CD8-positive, alpha-beta memory T cell (primary cell): ENCODE measurements at regions of chr3 and their contacts with region 1.

Region 1: DNA sequence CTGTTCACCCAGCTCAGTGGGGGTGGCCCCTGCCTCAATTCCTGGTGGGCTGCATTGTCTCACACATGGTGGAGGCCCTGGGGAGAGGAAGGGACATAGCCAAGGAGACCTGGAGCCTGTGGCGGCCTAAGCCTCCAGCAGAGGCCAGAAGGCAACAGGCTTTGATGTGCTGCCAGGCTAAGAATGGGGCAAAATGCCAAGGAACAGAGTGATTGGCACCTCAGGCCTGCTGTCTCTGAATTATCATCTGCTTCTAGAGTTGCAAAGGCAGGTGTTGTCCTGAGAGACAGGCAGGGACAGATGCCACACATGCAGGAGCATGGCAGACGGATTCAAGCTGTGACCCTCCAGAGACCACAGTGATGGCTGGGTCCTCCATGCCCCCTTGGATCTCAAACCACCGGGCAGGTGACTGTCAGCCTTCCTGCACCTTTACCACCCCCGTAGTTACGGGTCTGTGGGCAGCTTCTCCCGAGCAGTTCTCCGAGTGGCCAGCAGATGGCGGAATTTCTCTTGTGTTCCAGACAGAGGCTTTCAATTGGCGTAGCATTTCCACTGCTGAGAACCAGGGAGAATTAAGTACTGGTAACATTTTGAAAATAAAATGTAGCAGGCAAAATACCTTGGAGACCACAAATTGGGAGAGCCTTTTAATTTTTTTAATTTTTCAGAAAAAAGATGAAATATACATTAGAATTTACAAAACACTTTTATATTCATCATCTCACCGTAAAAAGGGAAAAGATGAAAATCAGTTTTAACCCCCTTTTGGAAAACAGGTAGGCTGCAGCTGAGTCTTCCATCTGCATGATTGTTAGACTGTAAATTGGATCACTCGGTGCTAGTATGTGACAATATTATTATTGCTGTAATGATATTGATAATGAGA is 525.5 kb upstream of the CFAP20DC start:
- DNase-seq: peak; percentile 68 to 87 (median 77)
- H3K4me3 ChIP-seq: no peak overlapping the region
- H3K4me3 Mint-ChIP-seq: no peak overlapping the region
- H3K27ac ChIP-seq: no peak overlapping the region
- H3K27ac Mint-ChIP-seq: no peak overlapping the region
- H3K4me1 ChIP-seq: peaks cover 9% of the 10 kb centered on the region
- H3K4me1 Mint-ChIP-seq: peaks cover 0 to 4% (median 0%) of the 10 kb centered on the region in 3 donors
- H3K27me3 ChIP-seq: no peaks in the 10 kb centered on the region
- H3K27me3 Mint-ChIP-seq: no peaks in the 10 kb centered on the region

Region 2: DNA sequence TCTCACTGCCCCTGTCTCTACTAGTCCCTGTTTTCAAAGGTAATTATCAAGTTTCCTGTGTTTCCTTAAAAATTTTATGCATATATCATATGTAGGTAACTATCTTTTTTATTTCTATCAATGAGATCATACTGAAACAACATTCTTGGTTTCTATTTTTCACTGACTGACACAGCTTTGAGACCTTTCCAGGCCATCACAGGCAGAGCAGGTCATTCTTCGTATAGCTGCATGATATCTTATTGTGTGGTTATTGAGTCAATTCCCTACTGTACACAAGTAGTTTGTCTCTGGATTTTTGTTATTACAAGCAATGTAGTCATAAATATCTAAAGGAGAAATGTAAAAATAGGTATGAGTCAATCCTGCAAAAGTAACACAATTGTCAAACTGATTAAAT is 695.2 kb before region 1 on chr3:
- CTCF ChIA-PET with region 1: no interaction called
- POLR2A ChIA-PET with region 1: no interaction called
- DNase-seq: no peak
- H3K4me3 ChIP-seq: no peak overlapping the region
- H3K4me3 Mint-ChIP-seq: no peak overlapping the region
- H3K27ac ChIP-seq: no peak overlapping the region
- H3K27ac Mint-ChIP-seq: no peak overlapping the region
- H3K4me1 ChIP-seq: no peaks in the 10 kb centered on the region
- H3K4me1 Mint-ChIP-seq: no peaks in the 10 kb centered on the region
- H3K27me3 ChIP-seq: no peaks in the 10 kb centered on the region
- H3K27me3 Mint-ChIP-seq: peaks cover 1 to 4% of the 10 kb centered on the region in 2 donors

Region 3: GRCh38 chr3:59480486-59480995 is 94.8 kb before region 1 on chr3:
- CTCF ChIA-PET with region 1: no interaction called
- POLR2A ChIA-PET with region 1: no interaction called
- DNase-seq: no peak
- H3K4me3 ChIP-seq: no peak overlapping the region
- H3K4me3 Mint-ChIP-seq: peak overlapping the region; percentile 13 to 75 (median 66)
- H3K27ac ChIP-seq: no peak overlapping the region
- H3K27ac Mint-ChIP-seq: peak overlapping the region in 5 of 8 donors; percentile 0 to 88 (median 11)
- H3K4me1 ChIP-seq: peaks cover 5% of the 10 kb centered on the region
- H3K4me1 Mint-ChIP-seq: peaks cover 15 to 17% (median 15%) of the 10 kb centered on the region in 3 donors
- H3K27me3 ChIP-seq: no peaks in the 10 kb centered on the region
- H3K27me3 Mint-ChIP-seq: peaks cover 0 to 3% of the 10 kb centered on the region in 2 donors

Region 4: GRCh38 chr3:59857589-59858346 is 282.4 kb after region 1 on chr3:
- CTCF ChIA-PET with region 1: interaction called, 21 read pairs
- POLR2A ChIA-PET with region 1: no interaction called
- DNase-seq: peak; percentile 60 to 76 (median 62)
- H3K4me3 ChIP-seq: no peak overlapping the region
- H3K4me3 Mint-ChIP-seq: peak overlapping the region in 2 of 7 donors; percentile 7 to 42
- H3K27ac ChIP-seq: no peak overlapping the region
- H3K27ac Mint-ChIP-seq: peak overlapping the region in 1 of 8 donors; percentile 40
- H3K4me1 ChIP-seq: peaks cover 8% of the 10 kb centered on the region
- H3K4me1 Mint-ChIP-seq: peaks cover 4 to 6% (median 5%) of the 10 kb centered on the region in 3 donors
- H3K27me3 ChIP-seq: no peaks in the 10 kb centered on the region
- H3K27me3 Mint-ChIP-seq: peaks cover 0 to 4% of the 10 kb centered on the region in 2 donors